K562 (cell line): ENCODE measurements at regions of chr9 and their contacts with region 1.

Region 1: GRCh38 chr9:128552153-128552743 is at the start of gene SPTAN1:
- DNase-seq: peak; percentile 92 to 97 (median 97)
- ATAC-seq: peak; percentile 94
- H3K4me3 ChIP-seq: peak within 1 kb of the TSS; percentile 60
- H3K27ac ChIP-seq: peak within 1 kb of the TSS; percentile 48; the same call in 1 of the 3 replicates
- H3K4me1 ChIP-seq: peaks cover 20% of the 10 kb centered on the region in 2 experiments
- H3K27me3 ChIP-seq: peaks cover 4 to 9% of the 10 kb centered on the region in 2 experiments; a peak in 2 of 5 replicates
- CTCF ChIP-seq: peak in 2 of 3 experiments; percentile 6 to 8; a peak in 1 of 6 replicates
- EP300 ChIP-seq: no peak
- POLR2A ChIP-seq: peak; percentile 80
- RAD21 ChIP-seq: no peak
- polyA plus RNA-seq, gene SPTAN1: 1.5 to 2.1 TPM

Region 2: GRCh38 chr9:128361986-128362646 is 190.1 kb before region 1 on chr9:
- CTCF ChIA-PET with region 1: no interaction called
- POLR2A ChIA-PET with region 1: interaction called, 3 read pairs
- in situ Hi-C with region 1: no loop called
- intact Hi-C with region 1: loop called (anchors 10 kb)
- DNase-seq: peak; percentile 79 to 86 (median 82)
- ATAC-seq: peak; percentile 91
- H3K4me3 ChIP-seq: no peak overlapping the region
- H3K27ac ChIP-seq: no peak overlapping the region
- H3K4me1 ChIP-seq: peaks cover 15 to 48% of the 10 kb centered on the region in 2 experiments; a peak in 4 of 5 replicates
- H3K27me3 ChIP-seq: no peaks in the 10 kb centered on the region
- CTCF ChIP-seq: peak; percentile 89 to 95 (median 93)
- EP300 ChIP-seq: peak; percentile 22; the same call in 1 of the 2 replicates
- POLR2A ChIP-seq: peak; percentile 37; the same call in 1 of the 2 replicates
- RAD21 ChIP-seq: peak; percentile 88 to 92

Region 3: GRCh38 chr9:128438343-128439109 is 113.7 kb before region 1 on chr9:
- CTCF ChIA-PET with region 1: interaction called, 5 read pairs
- POLR2A ChIA-PET with region 1: no interaction called
- in situ Hi-C with region 1: no loop called
- intact Hi-C with region 1: loop called (anchors 5 kb)
- DNase-seq: peak; percentile 86 to 92 (median 88)
- ATAC-seq: peak; percentile 97
- H3K4me3 ChIP-seq: no peak overlapping the region
- H3K27ac ChIP-seq: no peak overlapping the region
- H3K4me1 ChIP-seq: peaks cover 3 to 25% of the 10 kb centered on the region in 2 experiments; a peak in 4 of 5 replicates
- H3K27me3 ChIP-seq: no peaks in the 10 kb centered on the region
- CTCF ChIP-seq: peak; percentile 88 to 92 (median 90)
- EP300 ChIP-seq: no peak
- POLR2A ChIP-seq: no peak
- RAD21 ChIP-seq: peak; percentile 72 to 87

Region 4: GRCh38 chr9:128504485-128505413 is 47.5 kb before region 1 on chr9 and contains the start of gene GLE1:
- CTCF ChIA-PET with region 1: no interaction called
- POLR2A ChIA-PET with region 1: interaction called, 3 read pairs
- in situ Hi-C with region 1: no loop called
- intact Hi-C with region 1: loop called (anchors 5 kb)
- DNase-seq: peak; percentile 97 to 100 (median 98)
- ATAC-seq: peak; percentile 97
- H3K4me3 ChIP-seq: peak within 1 kb of the TSS; percentile 69
- H3K27ac ChIP-seq: peak within 1 kb of the TSS; percentile 86
- H3K4me1 ChIP-seq: peaks cover 6 to 11% of the 10 kb centered on the region in 2 experiments; a peak in 4 of 5 replicates
- H3K27me3 ChIP-seq: no peaks in the 10 kb centered on the region
- CTCF ChIP-seq: peak in 1 of 3 experiments; percentile 24; a peak in 1 of 6 replicates
- EP300 ChIP-seq: no peak
- POLR2A ChIP-seq: peak; percentile 90
- RAD21 ChIP-seq: no peak
- polyA plus RNA-seq, gene GLE1: 15.9 to 19.8 TPM

Region 5: DNA sequence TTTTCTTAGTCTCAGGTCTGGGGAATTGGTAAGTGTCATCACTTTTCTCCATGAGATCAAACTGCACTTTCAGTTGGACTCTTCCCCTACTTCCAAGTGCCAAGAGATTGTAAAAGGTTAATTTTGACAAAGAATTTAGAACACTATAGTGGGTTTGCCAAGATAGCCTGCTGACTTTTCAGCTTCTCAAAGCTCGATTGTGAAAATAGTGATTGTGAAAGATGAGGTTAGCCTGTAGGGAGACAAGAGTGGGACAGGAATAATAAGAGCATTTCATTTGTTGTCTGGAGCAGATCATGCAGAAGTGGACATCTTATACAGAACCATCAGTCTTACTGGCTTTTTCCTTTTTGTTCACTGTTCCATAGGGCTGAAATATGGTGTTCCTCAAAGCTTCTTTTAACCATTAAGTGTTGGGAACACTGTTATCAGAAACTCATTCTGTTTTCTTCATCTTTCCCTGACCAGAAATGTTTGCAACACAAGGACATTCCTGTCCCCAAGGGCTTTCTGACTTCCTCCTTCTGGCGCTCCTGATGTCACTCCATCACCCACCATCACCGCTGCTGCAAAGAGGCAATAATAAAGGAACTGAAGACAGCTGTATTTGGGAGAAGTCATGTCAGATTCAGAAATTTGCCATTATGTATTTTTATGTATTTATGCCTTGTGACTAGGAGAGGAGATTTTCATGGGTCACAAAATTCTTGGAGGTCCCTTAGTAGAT is 11.5 kb before region 1 on chr9:
- CTCF ChIA-PET with region 1: no interaction called
- POLR2A ChIA-PET with region 1: interaction called, 27 read pairs
- in situ Hi-C with region 1: no loop called
- intact Hi-C with region 1: no loop called
- DNase-seq: no peak
- ATAC-seq: no peak
- H3K4me3 ChIP-seq: no peak overlapping the region
- H3K27ac ChIP-seq: no peak overlapping the region
- H3K4me1 ChIP-seq: no peaks in the 10 kb centered on the region
- H3K27me3 ChIP-seq: no peaks in the 10 kb centered on the region
- CTCF ChIP-seq: no peak
- EP300 ChIP-seq: no peak
- POLR2A ChIP-seq: no peak
- RAD21 ChIP-seq: no peak